ENCODE measurements at regions of chr1 and their contacts with region 1.

Region 1: DNA sequence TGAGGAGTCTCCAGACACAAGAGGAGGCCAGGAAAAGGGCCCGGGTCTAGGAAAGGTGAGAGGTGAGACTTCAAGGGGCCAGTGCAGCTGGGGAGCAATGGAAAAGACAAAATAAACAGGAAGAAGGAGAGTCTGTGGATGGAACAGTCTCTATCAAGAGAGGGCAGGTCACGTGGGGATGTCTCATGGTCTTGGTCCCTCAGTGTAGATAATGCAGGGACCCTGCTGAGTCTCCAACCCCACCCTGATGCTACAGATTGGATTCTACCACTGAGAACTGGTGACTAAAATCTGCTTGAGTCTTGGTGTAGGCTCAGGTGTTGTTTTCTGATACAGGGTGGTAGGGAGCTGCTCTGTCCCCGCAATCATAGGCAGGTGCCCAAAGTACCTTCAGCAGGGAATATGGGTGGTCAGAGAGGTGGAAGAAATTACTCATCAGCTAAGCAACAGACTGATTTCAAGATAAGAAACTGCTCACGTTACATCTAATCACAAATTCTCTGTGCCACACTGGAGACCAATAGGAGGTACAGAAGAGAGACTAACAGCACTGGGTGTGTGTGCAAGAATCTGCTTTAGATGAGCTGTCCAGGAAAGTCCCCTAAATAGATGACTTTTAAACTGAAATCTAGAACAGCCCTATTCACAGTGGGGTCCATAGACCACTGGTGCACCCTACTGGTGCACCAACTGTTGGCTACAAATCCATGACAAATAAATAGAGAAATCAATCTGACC is 101.5 kb upstream of the TLR5 start:
- DNase-seq: no peak
- H3K4me3 ChIP-seq: no peak overlapping the region
- H3K4me3 Mint-ChIP-seq: no peak overlapping the region
- H3K27ac Mint-ChIP-seq: peak overlapping the region; percentile 24
- H3K4me1 ChIP-seq: peaks cover 18% of the 10 kb centered on the region
- H3K4me1 Mint-ChIP-seq: peaks cover 16% of the 10 kb centered on the region
- H3K27me3 ChIP-seq: no peaks in the 10 kb centered on the region
- H3K27me3 Mint-ChIP-seq: no peaks in the 10 kb centered on the region
- CTCF ChIP-seq: peak in 1 of 2 experiments; percentile 20

Region 2: DNA sequence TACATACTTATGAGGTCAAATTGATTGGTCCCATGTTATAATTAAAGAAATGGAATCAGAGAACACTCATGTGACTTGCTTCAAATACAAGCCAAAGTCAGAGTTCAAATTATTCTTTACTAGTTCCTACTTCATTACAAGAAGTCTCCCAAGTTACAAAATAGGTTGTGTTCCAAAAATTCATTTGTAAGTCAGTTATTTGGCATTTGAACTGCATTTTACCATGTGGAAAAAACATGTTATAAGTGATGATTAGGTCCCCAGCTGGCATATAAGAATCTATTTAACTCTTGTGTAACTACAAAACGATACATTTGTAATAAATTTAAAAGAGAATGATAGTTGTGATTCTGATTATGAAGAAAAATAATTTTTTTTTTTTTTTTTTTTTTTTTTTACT is 305.5 kb before region 1 on chr1:
- CTCF ChIA-PET with region 1: no interaction called
- POLR2A ChIA-PET with region 1: no interaction called
- intact Hi-C with region 1: no loop called
- DNase-seq: no peak
- H3K4me3 ChIP-seq: no peak overlapping the region
- H3K4me3 Mint-ChIP-seq: no peak overlapping the region
- H3K27ac Mint-ChIP-seq: no peak overlapping the region
- H3K4me1 ChIP-seq: no peaks in the 10 kb centered on the region
- H3K4me1 Mint-ChIP-seq: peaks cover 11% of the 10 kb centered on the region
- H3K27me3 ChIP-seq: no peaks in the 10 kb centered on the region
- H3K27me3 Mint-ChIP-seq: no peaks in the 10 kb centered on the region
- CTCF ChIP-seq: no peak

Region 3: GRCh38 chr1:223175032-223175431 is 69.5 kb before region 1 on chr1:
- CTCF ChIA-PET with region 1: interaction called, 10 read pairs
- POLR2A ChIA-PET with region 1: no interaction called
- intact Hi-C with region 1: loop called (anchors 1 kb)
- DNase-seq: peak; percentile 63 to 66
- H3K4me3 ChIP-seq: no peak overlapping the region
- H3K4me3 Mint-ChIP-seq: no peak overlapping the region
- H3K27ac Mint-ChIP-seq: peak overlapping the region; percentile 35
- H3K4me1 ChIP-seq: peaks cover 5% of the 10 kb centered on the region
- H3K4me1 Mint-ChIP-seq: peaks cover 5% of the 10 kb centered on the region
- H3K27me3 ChIP-seq: no peaks in the 10 kb centered on the region
- H3K27me3 Mint-ChIP-seq: no peaks in the 10 kb centered on the region
- CTCF ChIP-seq: peak; percentile 45 to 70

Region 4: GRCh38 chr1:223199094-223199647 is 45.4 kb before region 1 on chr1:
- CTCF ChIA-PET with region 1: no interaction called
- POLR2A ChIA-PET with region 1: no interaction called
- intact Hi-C with region 1: loop called (anchors 5 kb)
- DNase-seq: no peak
- H3K4me3 ChIP-seq: no peak overlapping the region
- H3K4me3 Mint-ChIP-seq: no peak overlapping the region
- H3K27ac Mint-ChIP-seq: no peak overlapping the region
- H3K4me1 ChIP-seq: peaks cover 26% of the 10 kb centered on the region
- H3K4me1 Mint-ChIP-seq: peaks cover 57% of the 10 kb centered on the region
- H3K27me3 ChIP-seq: no peaks in the 10 kb centered on the region
- H3K27me3 Mint-ChIP-seq: no peaks in the 10 kb centered on the region
- CTCF ChIP-seq: no peak

Region 5: DNA sequence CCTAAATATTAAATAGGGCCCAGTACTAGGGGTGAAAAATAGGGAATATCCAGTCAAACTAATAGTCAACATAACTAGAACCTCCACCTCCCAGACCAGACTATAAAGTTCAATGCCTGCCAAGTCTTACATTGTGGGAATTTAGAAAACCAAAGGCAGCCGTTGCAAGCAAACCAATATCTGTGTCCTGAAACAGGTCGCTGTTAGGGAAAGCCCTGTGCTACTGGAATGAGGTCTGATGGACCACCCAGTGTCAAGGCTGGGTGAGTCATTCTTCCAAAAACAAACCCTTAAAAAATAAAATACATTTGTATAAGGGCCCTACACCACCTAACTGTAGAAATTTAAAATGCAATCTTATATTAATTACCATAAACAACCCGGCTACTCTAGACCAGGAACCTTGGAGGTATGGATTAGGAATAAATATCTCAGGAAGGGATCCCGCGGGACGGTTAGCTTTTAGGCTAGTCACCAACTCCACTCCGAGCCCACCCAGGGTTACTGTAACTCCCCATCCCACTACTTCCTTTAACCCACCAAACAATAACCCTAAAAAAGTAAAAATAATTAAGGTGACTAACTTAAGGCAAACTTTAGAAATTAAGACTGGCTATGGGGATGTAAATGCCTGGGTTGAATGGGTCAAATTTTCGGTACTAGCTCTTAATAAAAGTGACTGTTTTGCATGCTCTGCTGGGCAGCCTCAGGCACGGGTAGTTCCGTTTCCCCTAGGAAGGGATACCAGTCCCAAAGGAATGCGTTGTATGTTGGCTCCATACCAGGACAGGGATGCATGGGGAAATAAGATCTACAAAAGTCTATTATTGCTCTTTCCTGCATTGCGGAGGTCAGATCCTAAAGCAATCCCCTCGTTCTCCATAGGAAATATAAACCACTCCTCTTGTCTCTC is 36.1 kb before region 1 on chr1:
- CTCF ChIA-PET with region 1: interaction called, 3 read pairs
- POLR2A ChIA-PET with region 1: no interaction called
- intact Hi-C with region 1: loop called (anchors 2 kb)
- DNase-seq: no peak
- H3K4me3 ChIP-seq: no peak overlapping the region
- H3K4me3 Mint-ChIP-seq: no peak overlapping the region
- H3K27ac Mint-ChIP-seq: peak overlapping the region; percentile 51
- H3K4me1 ChIP-seq: peaks cover 47% of the 10 kb centered on the region
- H3K4me1 Mint-ChIP-seq: peaks cover 55% of the 10 kb centered on the region
- H3K27me3 ChIP-seq: no peaks in the 10 kb centered on the region
- H3K27me3 Mint-ChIP-seq: no peaks in the 10 kb centered on the region
- CTCF ChIP-seq: no peak

Region 6: DNA sequence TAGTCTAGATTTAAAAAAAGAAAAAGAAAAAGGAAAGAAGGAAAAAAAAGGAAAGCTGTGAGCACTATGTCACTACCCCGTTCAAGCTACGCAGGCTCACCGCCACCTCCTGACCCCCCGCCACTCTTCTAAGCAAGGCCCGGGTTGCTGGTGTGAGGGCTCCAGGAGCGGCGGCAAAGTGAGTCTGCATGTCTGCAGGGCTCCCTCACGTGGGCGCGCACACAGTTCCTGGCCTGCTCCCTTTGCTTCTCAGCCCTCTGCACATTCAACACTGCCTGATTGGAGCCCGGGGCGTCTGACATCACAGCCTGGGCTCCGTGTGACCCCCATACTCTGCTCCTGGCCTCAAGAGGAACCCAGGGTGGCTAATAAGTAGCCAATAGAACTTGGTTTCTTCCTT is 20.1 kb before region 1 on chr1:
- CTCF ChIA-PET with region 1: no interaction called
- POLR2A ChIA-PET with region 1: no interaction called
- intact Hi-C with region 1: no loop called
- DNase-seq: no peak
- H3K4me3 ChIP-seq: no peak overlapping the region
- H3K4me3 Mint-ChIP-seq: no peak overlapping the region
- H3K27ac Mint-ChIP-seq: no peak overlapping the region
- H3K4me1 ChIP-seq: no peaks in the 10 kb centered on the region
- H3K4me1 Mint-ChIP-seq: no peaks in the 10 kb centered on the region
- H3K27me3 ChIP-seq: no peaks in the 10 kb centered on the region
- H3K27me3 Mint-ChIP-seq: no peaks in the 10 kb centered on the region
- CTCF ChIP-seq: no peak

Measured in Caco-2 (cell line).